Heart right ventricle (tissue), 16 donors: ENCODE measurements at regions of chr11 and their contacts with region 1.

Region 1: GRCh38 chr11:119666463-119667131 is 62.4 kb downstream of the NECTIN1 start:
- DNase-seq: peak; percentile 77 to 84
- ATAC-seq: peak; percentile 90 to 95 (median 92)
- H3K4me3 ChIP-seq: no peak overlapping the region
- H3K27ac ChIP-seq: no peak overlapping the region
- H3K4me1 ChIP-seq: peaks cover 0 to 28% (median 22%) of the 10 kb centered on the region in 9 donors
- H3K27me3 ChIP-seq: no peaks in the 10 kb centered on the region
- CTCF ChIP-seq: peak; percentile 94 to 98 (median 96)

Region 2: DNA sequence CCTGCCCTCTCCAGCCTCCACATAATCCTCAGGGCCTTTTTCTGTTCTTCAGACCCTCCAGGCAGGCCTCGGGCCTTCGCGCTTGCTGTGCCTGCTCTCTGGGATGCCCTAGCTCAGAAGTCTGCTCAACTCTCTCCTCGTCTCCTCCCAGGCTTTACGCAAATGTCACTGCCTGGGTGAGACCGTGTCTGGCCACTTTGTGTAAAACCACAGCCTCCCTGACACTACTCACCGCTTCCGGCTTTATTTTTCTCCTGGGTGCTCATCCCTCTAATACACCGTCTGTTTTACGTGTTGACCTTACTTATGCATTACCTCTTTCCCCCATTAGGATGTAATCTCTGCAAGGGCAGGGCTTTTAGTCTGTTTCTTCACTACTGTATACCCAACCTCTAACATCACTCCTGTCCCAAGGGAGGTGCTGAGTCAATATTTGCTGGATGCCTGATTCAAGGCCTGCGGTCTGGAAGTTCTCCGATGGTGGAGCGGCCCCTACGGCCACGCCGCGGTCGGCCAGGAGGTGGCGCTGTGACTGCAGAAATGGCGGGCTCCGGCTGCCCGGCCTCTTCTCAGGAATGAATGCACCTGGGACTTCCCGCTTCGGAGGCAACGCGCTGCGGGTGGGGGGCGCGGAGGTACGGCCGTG is 185.5 kb before region 1 on chr11:
- intact Hi-C with region 1: loop called in 2 of 10 experiments (anchors 5 to 10 kb)
- DNase-seq: peak; percentile 75 to 82
- ATAC-seq: peak; percentile 69 to 93 (median 86)
- H3K4me3 ChIP-seq: peak overlapping the region in 1 of 10 donors; percentile 11
- H3K27ac ChIP-seq: no peak overlapping the region
- H3K4me1 ChIP-seq: peaks cover 0 to 9% (median 4%) of the 10 kb centered on the region in 9 donors
- H3K27me3 ChIP-seq: peaks cover 0 to 21% (median 4%) of the 10 kb centered on the region in 7 donors
- CTCF ChIP-seq: peak; percentile 90 to 99 (median 97)

Region 3: DNA sequence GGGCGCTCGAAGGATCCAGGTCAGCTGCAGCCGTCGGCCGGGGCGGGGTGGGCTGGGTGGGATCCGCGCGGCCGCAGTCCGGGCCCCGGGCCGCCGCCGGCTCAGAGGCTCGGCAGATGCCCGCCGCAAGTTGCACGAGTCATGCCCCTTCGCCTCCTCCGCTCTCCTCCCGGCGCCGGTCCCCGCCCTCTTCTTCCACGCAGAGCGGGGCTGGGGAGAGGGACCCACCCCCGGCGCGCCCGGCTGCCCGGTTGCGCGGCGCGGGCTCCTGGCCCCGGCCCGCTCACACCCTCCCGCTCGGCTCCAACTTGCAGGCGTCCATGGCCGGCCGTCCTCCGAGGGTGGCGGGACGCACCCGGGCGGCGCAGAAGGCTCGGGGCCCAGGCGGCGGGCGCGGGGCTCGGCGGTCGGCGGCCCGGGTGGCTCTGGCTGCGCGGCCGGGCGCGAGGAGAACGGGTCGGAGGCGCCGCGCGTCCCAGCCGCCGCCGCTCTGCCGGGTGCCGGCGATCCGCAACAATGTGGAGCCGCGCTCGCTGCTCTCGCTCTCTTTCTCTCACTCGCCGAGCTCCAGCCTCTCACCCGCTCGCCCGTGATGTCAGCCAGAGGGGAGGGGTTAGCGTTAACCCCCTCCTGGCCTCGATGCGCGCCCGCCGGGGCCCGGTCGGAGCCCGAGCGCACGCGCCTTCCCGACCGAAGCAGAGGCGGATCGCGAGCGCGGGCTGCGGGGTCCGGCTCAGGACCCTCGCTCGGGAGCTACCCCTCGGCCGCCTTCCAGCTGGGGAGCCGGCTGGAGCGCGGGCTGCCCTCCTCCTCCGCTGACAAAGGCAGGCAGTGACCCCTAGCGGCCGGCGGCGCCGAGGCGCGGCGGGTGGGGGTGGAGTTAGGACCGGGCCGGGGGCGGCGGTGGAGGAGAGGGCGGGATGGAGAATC is 62.3 kb after region 1 on chr11 and contains the start of gene NECTIN1:
- intact Hi-C with region 1: loop called in 9 of 10 experiments (anchors 2 to 5 kb)
- DNase-seq: peak; percentile 90 to 91
- ATAC-seq: peak; percentile 91 to 96 (median 94)
- H3K4me3 ChIP-seq: peak within 1 kb of the TSS; percentile 64 to 93 (median 80)
- H3K27ac ChIP-seq: peak within 1 kb of the TSS; percentile 75 to 91 (median 84)
- H3K4me1 ChIP-seq: peaks cover 3 to 36% (median 32%) of the 10 kb centered on the region in 9 donors
- H3K27me3 ChIP-seq: peaks cover 0 to 14% (median 0%) of the 10 kb centered on the region in 7 donors
- CTCF ChIP-seq: peak; percentile 94 to 100 (median 99)
- total RNA-seq, gene NECTIN1: 6.6 to 22.8 (median 11.6) TPM

Region 4: GRCh38 chr11:120013325-120014270 is 347.0 kb after region 1 on chr11:
- intact Hi-C with region 1: loop called in 7 of 10 experiments (anchors 2 to 10 kb)
- DNase-seq: peak; percentile 42 to 53
- ATAC-seq: peak; percentile 76 to 89 (median 83)
- H3K4me3 ChIP-seq: no peak overlapping the region
- H3K27ac ChIP-seq: no peak overlapping the region
- H3K4me1 ChIP-seq: peaks cover 0 to 6% (median 0%) of the 10 kb centered on the region in 9 donors
- H3K27me3 ChIP-seq: peaks cover 0 to 83% (median 59%) of the 10 kb centered on the region in 7 donors
- CTCF ChIP-seq: peak; percentile 33 to 76 (median 72)

Region 5: DNA sequence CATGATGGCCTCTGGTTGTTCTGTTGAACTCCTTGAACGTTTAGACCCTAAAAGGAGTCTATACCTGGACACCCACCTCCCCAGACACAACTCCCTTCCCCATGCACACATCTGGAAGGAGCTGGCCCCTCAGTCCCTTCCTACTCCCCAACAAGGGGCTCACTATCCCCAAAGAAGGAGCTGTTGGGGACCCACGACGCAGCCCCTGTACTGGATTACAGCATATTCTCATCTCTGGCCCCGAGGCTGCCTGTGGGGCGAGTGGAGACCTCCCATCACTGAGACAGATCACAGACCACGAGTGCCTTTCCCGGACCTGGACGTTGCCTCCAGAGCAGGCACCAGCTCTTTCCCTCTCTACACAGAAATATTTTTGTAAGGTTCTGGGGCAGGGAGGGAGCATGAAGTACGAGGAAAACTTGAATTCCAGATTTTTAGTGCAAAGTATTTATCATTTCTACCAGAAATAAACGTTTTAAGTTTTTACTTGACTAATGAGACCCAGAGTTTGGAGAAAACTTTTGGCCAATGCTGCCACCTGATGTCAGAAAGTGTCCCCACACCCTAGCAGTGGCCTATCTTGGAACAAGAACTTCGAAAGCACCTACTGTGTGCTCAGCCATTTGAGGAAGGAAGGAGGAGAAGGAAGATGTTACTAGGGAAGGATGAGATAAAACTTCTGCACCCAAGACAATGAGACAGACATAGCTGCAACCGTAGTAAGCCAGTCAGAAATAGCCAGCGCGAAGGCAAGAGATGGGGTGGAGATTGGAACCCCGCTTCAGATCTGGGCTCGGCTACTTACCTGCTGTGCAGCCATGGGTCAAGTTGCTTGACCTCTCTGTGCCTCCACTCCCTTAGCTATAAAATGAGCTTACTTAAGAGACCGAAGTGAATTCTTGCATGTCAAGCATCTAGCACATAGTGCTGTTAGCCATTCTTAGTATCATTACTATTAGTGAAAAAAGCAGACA is 563.1 kb after region 1 on chr11:
- intact Hi-C with region 1: loop called in 1 of 10 experiments (anchors 10 kb)
- DNase-seq: no peak
- ATAC-seq: peak in 1 of 8 donors; percentile 45
- H3K4me3 ChIP-seq: no peak overlapping the region
- H3K27ac ChIP-seq: no peak overlapping the region
- H3K4me1 ChIP-seq: peaks cover 0 to 20% (median 15%) of the 10 kb centered on the region in 9 donors
- H3K27me3 ChIP-seq: peaks cover 0 to 21% (median 14%) of the 10 kb centered on the region in 7 donors
- CTCF ChIP-seq: peak; percentile 64 to 88 (median 78)